ENCODE measurements at regions of chr14 and their contacts with region 1.

Region 1: GRCh38 chr14:105086833-105087307 is 21.6 kb upstream of the GPR132 start:
- DNase-seq: peak; percentile 81
- ATAC-seq: peak; percentile 89
- H3K4me3 Mint-ChIP-seq: peak overlapping the region; percentile 80
- H3K27ac Mint-ChIP-seq: no peak overlapping the region
- H3K4me1 Mint-ChIP-seq: peaks cover 14% of the 10 kb centered on the region
- H3K27me3 Mint-ChIP-seq: peaks cover 6% of the 10 kb centered on the region
- CTCF ChIP-seq: peak; percentile 82

Region 2: DNA sequence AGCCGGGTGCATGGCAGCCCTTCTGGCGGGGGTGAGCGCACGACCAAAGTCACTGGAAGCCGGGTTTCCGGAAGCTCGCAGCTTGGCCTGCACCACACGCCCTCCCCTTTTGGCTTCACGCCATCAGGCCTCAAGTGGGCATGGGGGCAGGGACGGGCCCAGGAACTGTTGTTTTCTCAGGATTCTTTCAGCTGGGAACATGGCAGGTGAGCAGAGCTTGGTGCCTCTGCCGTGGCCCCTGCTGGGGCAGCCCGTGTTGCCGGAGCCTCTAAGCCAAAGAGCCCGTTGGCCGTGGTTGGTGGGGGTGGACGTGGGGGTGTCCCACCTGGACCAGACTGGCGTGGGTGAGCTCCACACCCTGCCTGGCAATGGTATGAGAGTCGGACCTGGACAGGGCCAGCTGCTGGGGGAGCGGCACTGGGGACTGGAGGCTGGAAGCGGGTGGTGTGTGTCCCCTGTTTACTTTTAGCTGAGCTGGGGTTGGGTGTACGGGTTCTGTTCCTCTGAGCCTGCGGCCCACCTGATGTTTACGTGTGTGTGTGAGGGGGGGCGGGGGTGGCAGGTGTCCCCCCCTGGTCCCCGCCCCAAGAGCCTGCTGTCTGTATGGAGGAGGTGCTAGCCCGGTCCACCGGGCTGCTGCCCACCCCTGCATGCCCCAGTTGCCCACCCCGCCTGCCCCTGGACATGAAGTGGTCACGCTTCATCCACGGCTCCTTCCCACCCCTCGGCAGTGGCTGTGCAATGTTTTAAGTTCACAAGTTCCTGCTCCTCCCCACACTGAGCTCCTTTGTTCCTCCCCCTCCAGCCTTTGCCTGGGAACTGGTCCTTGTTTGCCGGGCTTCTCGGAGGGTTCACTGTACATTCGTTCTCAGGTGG is 190.8 kb before region 1 on chr14:
- CTCF ChIA-PET with region 1: no interaction called
- POLR2A ChIA-PET with region 1: no interaction called
- intact Hi-C with region 1: loop called (anchors 1 kb)
- DNase-seq: no peak
- ATAC-seq: no peak
- H3K4me3 Mint-ChIP-seq: no peak overlapping the region
- H3K27ac Mint-ChIP-seq: no peak overlapping the region
- H3K4me1 Mint-ChIP-seq: peaks cover 6% of the 10 kb centered on the region
- H3K27me3 Mint-ChIP-seq: peaks cover 5% of the 10 kb centered on the region
- CTCF ChIP-seq: no peak

Region 3: GRCh38 chr14:104932676-104933631 is 153.9 kb before region 1 on chr14:
- CTCF ChIA-PET with region 1: no interaction called
- POLR2A ChIA-PET with region 1: no interaction called
- intact Hi-C with region 1: no loop called
- DNase-seq: peak; percentile 86
- ATAC-seq: peak; percentile 81
- H3K4me3 Mint-ChIP-seq: peak overlapping the region; percentile 72
- H3K27ac Mint-ChIP-seq: no peak overlapping the region
- H3K4me1 Mint-ChIP-seq: peaks cover 16% of the 10 kb centered on the region
- H3K27me3 Mint-ChIP-seq: no peaks in the 10 kb centered on the region
- CTCF ChIP-seq: no peak

Region 4: GRCh38 chr14:105020815-105021655 is 65.8 kb before region 1 on chr14 and contains the start of gene CDCA4:
- CTCF ChIA-PET with region 1: no interaction called
- POLR2A ChIA-PET with region 1: interaction called, 5 read pairs
- intact Hi-C with region 1: loop called (anchors 2 kb)
- DNase-seq: peak; percentile 97
- ATAC-seq: peak; percentile 84
- H3K4me3 Mint-ChIP-seq: peak within 1 kb of the TSS; percentile 92
- H3K27ac Mint-ChIP-seq: peak within 1 kb of the TSS; percentile 94
- H3K4me1 Mint-ChIP-seq: peaks cover 62% of the 10 kb centered on the region
- H3K27me3 Mint-ChIP-seq: no peaks in the 10 kb centered on the region
- CTCF ChIP-seq: no peak
- total RNA-seq, gene CDCA4: 11.7 and 13.6 TPM in 2 replicates

Region 5: DNA sequence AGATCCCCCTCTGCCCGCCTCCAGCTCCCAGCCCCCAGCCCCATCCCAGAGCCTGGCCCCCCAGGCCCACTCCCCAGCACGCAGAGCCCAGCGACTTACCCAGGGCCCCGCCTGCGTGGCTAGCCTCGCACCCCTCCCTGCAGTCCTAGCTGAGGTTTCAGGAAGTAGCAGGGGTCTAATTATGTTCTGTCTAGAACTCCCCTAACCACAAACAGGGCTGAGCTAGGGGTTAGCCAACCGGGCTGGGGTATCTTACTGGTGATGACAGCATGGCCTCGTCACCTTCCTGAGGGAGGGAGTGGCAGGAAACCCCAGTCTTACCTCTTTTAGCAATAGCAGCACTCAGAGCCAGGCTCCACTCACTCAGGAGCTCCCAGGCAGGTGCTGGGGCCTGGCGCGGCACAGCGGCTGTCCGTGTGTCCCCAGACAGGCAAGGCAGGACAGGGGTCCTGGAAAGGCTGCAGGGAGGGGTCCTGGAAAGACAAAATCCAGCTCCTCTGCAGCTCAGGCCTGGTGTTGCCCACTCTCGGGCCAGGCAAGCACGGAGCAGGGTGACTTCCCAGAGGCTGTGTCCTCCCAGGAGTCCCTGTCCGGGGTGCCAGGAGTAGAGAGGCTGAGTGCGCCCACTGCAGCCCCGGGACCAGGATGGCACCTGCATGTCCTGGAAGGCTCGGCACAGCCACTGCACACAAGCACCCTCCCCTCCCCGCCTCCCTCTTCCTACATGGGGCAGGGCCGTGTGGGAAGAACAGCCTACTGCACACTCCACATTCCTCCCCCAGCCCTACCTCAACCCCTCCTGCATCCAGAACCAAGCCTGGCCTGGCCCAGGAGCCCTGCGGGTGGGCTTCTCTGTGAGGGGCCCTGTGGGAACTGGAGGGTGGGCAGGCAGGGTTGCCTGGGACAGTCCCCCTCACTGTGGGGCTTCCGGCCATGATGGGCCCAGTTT is 21.3 kb before region 1 on chr14 and contains the start of gene GPR132:
- CTCF ChIA-PET with region 1: interaction called, 56 read pairs
- POLR2A ChIA-PET with region 1: interaction called, 32 read pairs
- intact Hi-C with region 1: loop called (anchors 1 kb)
- DNase-seq: peak; percentile 66
- ATAC-seq: peak; percentile 73
- H3K4me3 Mint-ChIP-seq: peak within 1 kb of the TSS; percentile 90
- H3K27ac Mint-ChIP-seq: peak within 1 kb of the TSS; percentile 89
- H3K4me1 Mint-ChIP-seq: peaks cover 88% of the 10 kb centered on the region
- H3K27me3 Mint-ChIP-seq: no peaks in the 10 kb centered on the region
- CTCF ChIP-seq: no peak
- total RNA-seq, gene GPR132: 43.4 and 48.5 TPM in 2 replicates

Region 6: DNA sequence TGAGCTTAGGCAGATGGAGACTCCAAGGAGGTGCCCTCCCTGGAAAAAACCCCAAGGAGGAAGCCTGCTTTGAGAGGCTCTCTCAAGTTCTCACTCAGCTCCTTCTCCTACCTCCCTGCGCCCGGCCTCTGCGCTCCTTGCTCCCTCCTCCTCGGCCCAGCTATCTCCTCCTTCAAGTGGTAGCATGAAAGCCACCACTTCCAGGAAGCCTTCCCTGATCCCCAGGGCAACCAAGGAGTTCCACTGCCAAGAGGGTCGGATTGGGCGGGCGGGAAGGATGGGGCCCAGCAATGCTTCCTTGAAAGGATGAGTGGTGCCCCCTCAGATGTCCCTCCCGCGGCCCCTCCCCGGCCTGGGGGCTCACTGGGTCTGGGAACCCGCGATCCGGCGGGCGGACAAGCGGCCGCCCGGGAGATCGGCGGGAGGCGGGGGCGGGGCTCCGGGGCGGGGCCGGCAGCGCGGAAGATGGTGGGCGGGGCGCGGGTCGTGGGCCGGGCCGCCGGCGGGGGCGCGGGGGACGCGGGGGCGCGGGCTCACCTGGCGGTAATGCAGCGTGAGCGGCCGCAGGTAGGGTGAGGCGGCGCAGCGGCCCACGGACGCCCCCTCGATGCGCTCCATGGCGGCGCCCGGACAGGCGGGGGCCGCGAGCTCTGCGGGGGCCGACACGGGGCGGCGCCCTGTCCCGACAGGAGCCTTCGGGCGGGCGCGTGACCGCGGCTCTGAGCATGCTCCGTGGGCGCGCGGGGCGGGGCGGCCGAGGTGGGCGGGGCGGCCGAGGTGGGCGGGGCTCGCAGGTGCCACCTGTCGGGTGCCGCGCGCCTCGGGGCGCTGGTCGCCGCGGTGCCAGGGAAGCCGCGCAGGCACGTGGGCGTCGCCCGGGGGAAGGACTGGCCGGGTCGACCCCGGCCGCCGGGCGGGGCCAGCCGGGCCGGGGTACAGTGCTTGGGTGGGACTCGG is 94.0 kb after region 1 on chr14 and contains the start of gene NUDT14:
- CTCF ChIA-PET with region 1: no interaction called
- POLR2A ChIA-PET with region 1: no interaction called
- intact Hi-C with region 1: loop called (anchors 5 kb)
- DNase-seq: peak; percentile 86
- ATAC-seq: peak; percentile 95
- H3K4me3 Mint-ChIP-seq: peak within 1 kb of the TSS; percentile 76
- H3K27ac Mint-ChIP-seq: no peak within 1 kb of the TSS
- H3K4me1 Mint-ChIP-seq: peaks cover 9% of the 10 kb centered on the region
- H3K27me3 Mint-ChIP-seq: peaks cover 5% of the 10 kb centered on the region
- CTCF ChIP-seq: no peak
- total RNA-seq, gene NUDT14: 15.1 and 15.2 TPM in 2 replicates

Region 7: GRCh38 chr14:105351920-105352851 is 265.3 kb after region 1 on chr14:
- CTCF ChIA-PET with region 1: interaction called, 4 read pairs
- POLR2A ChIA-PET with region 1: no interaction called
- intact Hi-C with region 1: loop called (anchors 1 kb)
- DNase-seq: peak; percentile 73
- ATAC-seq: peak; percentile 90
- H3K4me3 Mint-ChIP-seq: no peak overlapping the region
- H3K27ac Mint-ChIP-seq: peak overlapping the region; percentile 53
- H3K4me1 Mint-ChIP-seq: peaks cover 7% of the 10 kb centered on the region
- H3K27me3 Mint-ChIP-seq: no peaks in the 10 kb centered on the region
- CTCF ChIP-seq: no peak